Activated B cell treated with CpG ODN at 0.5 μM for 24 hours (primary cell): ENCODE measurements at regions of chr5 and their contacts with region 1.

Region 1: DNA sequence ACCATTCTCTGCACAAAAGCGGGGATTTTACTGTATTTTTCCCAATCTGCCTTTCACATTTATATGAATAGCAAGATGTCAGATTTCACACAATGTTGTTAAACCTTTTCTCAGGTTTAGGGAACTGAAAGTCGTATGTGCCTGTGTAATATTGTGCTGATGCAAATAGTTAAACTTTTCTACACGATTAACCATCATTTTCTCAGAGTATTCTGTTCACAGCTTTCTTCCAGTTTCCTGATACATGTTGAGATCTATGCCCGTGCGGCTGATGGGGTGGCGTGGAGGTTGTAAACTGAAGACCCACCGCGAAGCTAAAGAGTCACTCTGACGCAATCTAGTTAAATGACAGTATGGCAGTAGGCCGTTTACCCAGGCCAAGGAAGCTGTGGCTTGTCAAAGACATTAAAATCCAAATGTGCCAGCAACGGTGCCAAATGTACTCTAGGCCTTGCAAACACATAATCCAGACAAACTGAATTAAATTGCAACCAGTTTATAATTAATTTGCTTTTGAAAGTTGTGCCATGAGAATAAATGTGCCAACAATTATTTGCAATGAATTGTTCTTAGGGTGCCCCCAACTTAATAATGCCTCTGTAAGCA is 145.7 kb downstream of the EBF1 start:
- DNase-seq: peak; percentile 51
- ATAC-seq: peak; percentile 73
- H3K4me3 Mint-ChIP-seq: peak overlapping the region; percentile 62
- H3K27ac Mint-ChIP-seq: peak overlapping the region; percentile 96
- H3K4me1 Mint-ChIP-seq: peaks cover 97% of the 10 kb centered on the region
- H3K27me3 Mint-ChIP-seq: no peaks in the 10 kb centered on the region
- CTCF ChIP-seq: no peak

Region 2: DNA sequence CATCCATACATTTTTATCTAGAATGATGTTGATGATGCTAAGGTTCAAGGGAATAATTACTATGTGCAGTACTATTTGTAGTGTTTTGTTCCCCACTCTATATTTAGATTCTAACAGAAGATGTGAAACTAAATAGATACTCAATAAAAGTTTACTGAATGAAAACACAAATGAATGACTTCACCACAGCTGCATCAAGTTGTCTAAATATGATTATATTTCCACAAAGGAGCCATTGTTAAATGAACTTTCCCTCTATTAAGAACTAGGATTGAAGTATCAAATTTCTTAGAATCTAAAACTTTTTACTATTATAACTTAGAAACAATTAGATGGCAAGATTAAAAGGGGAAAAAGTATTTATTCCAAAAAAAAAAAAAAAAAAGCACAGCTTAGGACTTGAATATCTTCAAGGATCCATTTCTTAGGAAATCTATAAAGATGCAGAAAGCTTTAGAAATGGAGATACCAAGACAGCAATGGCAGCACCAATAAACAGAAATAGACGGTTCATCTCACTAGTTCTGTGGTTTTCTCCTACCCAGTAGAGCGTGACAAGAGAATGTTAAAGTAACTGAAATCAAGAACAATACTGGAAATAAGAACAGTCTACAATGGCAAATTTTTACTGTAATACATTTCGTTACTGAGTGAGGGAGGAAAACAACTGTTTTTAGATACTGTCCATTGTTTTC is 201.9 kb before region 1 on chr5:
- CTCF ChIA-PET with region 1: no interaction called
- POLR2A ChIA-PET with region 1: no interaction called
- intact Hi-C with region 1: loop called (anchors 1 kb)
- DNase-seq: no peak
- ATAC-seq: peak; percentile 83
- H3K4me3 Mint-ChIP-seq: peak overlapping the region; percentile 71
- H3K27ac Mint-ChIP-seq: peak overlapping the region; percentile 84
- H3K4me1 Mint-ChIP-seq: peaks cover 92% of the 10 kb centered on the region
- H3K27me3 Mint-ChIP-seq: no peaks in the 10 kb centered on the region
- CTCF ChIP-seq: no peak

Region 3: DNA sequence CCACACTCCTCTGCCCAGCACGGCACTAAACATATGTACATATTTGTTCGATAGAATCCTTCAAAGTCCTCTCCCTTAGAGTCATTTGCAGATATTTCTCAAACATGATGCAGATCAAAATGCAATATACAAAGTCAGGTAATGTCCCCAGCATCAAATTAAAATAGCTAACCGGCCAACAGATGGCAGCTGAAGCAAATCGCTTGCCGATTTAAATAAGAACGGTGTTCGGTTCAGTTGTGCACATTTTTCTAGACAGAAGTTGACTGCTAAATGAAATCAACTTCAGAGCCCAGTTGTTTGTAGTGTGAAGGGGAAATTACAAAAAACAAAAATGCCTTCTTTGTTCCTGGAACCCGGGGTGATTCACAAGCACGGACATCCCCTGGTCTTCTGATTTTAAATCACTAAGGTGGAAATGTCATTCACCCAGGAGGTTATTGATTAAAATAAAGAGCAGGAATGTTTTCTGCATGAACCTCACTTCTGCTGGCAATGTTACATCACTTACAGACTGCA is 73.5 kb before region 1 on chr5:
- CTCF ChIA-PET with region 1: interaction called, 4 read pairs
- POLR2A ChIA-PET with region 1: interaction called, 32 read pairs
- intact Hi-C with region 1: loop called (anchors 5 kb)
- DNase-seq: no peak
- ATAC-seq: peak; percentile 28
- H3K4me3 Mint-ChIP-seq: peak overlapping the region; percentile 70
- H3K27ac Mint-ChIP-seq: peak overlapping the region; percentile 88
- H3K4me1 Mint-ChIP-seq: peaks cover 95% of the 10 kb centered on the region
- H3K27me3 Mint-ChIP-seq: no peaks in the 10 kb centered on the region
- CTCF ChIP-seq: no peak

Region 4: DNA sequence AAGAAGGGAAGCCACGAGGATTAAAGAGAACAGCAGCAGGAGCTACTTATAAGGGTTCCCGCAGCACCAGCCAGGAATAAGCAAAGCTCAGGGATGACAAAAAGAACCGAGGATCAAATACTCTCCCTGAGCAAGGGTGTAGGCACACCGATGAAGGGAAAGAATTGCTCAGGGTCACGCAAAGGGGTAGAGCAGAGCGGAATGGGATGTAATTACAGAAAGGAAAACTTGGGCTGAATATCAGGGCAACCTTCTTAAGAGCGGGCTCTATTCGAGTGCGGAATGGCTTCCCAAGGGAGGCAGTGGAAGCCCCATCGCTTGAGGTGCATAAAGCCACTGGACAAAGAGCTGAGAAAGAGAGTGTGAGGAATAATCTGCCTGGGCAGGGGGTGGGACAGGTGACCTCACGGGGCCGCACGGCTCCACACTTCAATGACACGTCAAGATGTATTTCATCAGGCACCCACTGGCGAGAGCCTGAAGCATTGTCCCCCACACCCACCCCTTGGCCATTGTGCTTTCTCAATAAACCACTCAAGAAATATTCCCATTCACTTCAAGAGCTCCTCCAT is 16.6 kb before region 1 on chr5:
- CTCF ChIA-PET with region 1: interaction called, 4 read pairs
- POLR2A ChIA-PET with region 1: interaction called, 5 read pairs
- intact Hi-C with region 1: loop called (anchors 2 kb)
- DNase-seq: no peak
- ATAC-seq: no peak
- H3K4me3 Mint-ChIP-seq: no peak overlapping the region
- H3K27ac Mint-ChIP-seq: no peak overlapping the region
- H3K4me1 Mint-ChIP-seq: peaks cover 86% of the 10 kb centered on the region
- H3K27me3 Mint-ChIP-seq: no peaks in the 10 kb centered on the region
- CTCF ChIP-seq: no peak

Region 5: GRCh38 chr5:158974775-158975174 is 20.7 kb after region 1 on chr5:
- CTCF ChIA-PET with region 1: no interaction called
- POLR2A ChIA-PET with region 1: interaction called, 7 read pairs
- intact Hi-C with region 1: loop called (anchors 2 kb)
- DNase-seq: no peak
- ATAC-seq: no peak
- H3K4me3 Mint-ChIP-seq: no peak overlapping the region
- H3K27ac Mint-ChIP-seq: peak overlapping the region; percentile 41
- H3K4me1 Mint-ChIP-seq: peaks cover 47% of the 10 kb centered on the region
- H3K27me3 Mint-ChIP-seq: no peaks in the 10 kb centered on the region
- CTCF ChIP-seq: no peak

Region 6: DNA sequence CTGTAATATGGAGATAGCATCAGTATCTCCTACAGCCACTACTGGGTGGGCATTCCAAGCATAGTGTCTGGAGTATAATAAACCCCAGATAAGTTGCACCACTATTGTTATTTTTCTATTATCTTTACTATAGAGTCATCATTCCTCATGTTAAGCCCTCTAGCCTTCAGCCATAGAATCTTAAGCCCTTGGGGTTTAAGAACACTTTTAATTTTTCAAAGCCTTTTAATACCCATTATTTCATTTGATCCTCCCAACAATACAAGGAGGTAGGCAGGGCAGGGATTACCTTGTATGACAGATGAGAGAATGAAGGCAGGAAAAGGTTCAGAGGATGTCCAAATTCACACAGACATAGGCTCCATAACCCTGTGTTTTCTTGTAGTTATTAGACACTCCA is 33.2 kb after region 1 on chr5:
- CTCF ChIA-PET with region 1: no interaction called
- POLR2A ChIA-PET with region 1: no interaction called
- intact Hi-C with region 1: no loop called
- DNase-seq: no peak
- ATAC-seq: no peak
- H3K4me3 Mint-ChIP-seq: no peak overlapping the region
- H3K27ac Mint-ChIP-seq: no peak overlapping the region
- H3K4me1 Mint-ChIP-seq: peaks cover 75% of the 10 kb centered on the region
- H3K27me3 Mint-ChIP-seq: no peaks in the 10 kb centered on the region
- CTCF ChIP-seq: no peak

Region 7: DNA sequence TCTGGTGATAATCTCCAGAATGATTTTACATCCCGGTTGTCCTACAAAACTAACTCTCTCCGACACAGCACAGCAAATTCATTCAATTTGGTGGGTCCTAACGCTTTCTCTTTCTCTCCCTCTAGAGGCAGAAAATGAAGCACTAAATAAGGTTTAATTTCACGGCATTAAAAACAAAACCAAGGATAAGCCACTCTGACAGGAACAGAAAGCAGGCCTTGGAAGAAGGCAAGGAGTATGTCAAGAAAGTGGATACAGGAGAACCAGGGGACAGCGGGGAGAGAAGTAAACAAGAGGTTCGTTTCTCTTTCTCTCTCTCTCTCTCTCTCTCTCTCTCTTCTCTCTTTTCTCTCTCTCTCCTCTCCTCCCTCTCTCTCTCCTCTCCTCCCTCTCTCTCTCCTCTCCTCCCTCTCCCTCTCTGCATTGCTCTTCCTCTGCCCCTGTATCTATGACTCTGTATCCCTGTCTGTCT is 95.8 kb after region 1 on chr5:
- CTCF ChIA-PET with region 1: interaction called, 4 read pairs
- POLR2A ChIA-PET with region 1: interaction called, 22 read pairs
- intact Hi-C with region 1: loop called (anchors 2 kb)
- DNase-seq: no peak
- ATAC-seq: no peak
- H3K4me3 Mint-ChIP-seq: peak overlapping the region; percentile 76
- H3K27ac Mint-ChIP-seq: peak overlapping the region; percentile 93
- H3K4me1 Mint-ChIP-seq: peaks cover 97% of the 10 kb centered on the region
- H3K27me3 Mint-ChIP-seq: no peaks in the 10 kb centered on the region
- CTCF ChIP-seq: no peak

Region 8: GRCh38 chr5:159156426-159157238 is 202.6 kb after region 1 on chr5:
- CTCF ChIA-PET with region 1: no interaction called
- POLR2A ChIA-PET with region 1: no interaction called
- intact Hi-C with region 1: no loop called
- DNase-seq: no peak
- ATAC-seq: peak; percentile 53
- H3K4me3 Mint-ChIP-seq: peak overlapping the region; percentile 50
- H3K27ac Mint-ChIP-seq: peak overlapping the region; percentile 85
- H3K4me1 Mint-ChIP-seq: peaks cover 36% of the 10 kb centered on the region
- H3K27me3 Mint-ChIP-seq: no peaks in the 10 kb centered on the region
- CTCF ChIP-seq: peak; percentile 78